Ovary (tissue), 10 donors: ENCODE measurements at regions of chr5 and their contacts with region 1.

Region 1: DNA sequence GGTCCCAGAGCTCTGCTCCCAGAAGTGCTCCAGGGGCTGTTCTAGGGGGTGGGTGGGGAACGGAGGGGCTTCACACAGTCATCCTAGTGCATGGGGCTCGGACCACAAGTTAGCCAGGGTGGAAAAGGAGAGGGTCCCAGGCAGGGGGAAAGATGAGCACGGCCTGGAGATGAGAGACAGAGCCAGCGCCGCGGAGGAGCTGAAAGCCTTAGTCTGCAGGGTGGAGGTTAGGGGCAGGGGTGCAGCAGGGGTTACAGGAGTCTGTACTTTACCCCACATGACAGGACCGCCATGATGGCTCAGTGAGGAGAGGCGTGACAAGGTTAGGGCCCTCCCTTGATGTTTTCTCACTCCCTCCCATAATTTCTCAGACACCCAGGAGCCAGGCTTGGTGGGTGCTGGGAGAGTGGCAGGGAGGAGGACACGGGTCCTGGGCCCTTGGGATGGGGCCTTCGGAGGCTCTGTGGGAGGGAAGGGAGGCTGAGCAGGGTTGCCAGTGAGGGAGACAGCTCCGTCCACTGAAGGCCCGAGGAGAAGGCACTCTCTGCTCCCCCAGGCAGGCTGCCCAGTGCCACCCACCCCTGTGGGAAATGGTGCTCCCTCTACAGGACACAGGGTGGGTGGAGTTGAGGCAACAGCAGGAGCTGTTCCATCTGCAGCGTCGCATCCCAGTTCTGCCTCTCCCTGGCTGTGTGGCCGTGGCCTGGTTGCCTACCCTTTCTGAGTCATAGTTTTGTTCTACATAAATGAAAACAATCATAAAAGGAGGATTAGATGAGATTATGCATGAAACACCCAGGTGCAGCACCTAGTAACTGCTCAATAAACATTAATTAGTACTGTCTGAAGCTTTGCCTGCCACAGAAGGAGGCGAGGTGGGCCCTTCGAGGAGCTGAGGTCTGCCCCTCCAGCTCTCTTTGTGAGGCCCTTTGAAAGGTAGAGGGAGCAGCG is 66.2 kb downstream of the NDST1 start:
- DNase-seq: peak in 3 of 5 donors; percentile 23 to 33 (median 26)
- H3K4me3 ChIP-seq: no peak overlapping the region
- H3K27ac ChIP-seq: no peak overlapping the region
- H3K4me1 ChIP-seq: peaks cover 2% of the 10 kb centered on the region
- H3K27me3 ChIP-seq: no peaks in the 10 kb centered on the region
- CTCF ChIP-seq: no peak
- EP300 ChIP-seq: no peak
- POLR2A ChIP-seq: no peak

Region 2: GRCh38 chr5:150544611-150545219 is 29.4 kb before region 1 on chr5:
- intact Hi-C with region 1: loop called in 1 of 4 experiments (anchors 1 kb)
- DNase-seq: peak; percentile 61 to 79 (median 72)
- H3K4me3 ChIP-seq: no peak overlapping the region
- H3K27ac ChIP-seq: no peak overlapping the region
- H3K4me1 ChIP-seq: peaks cover 16% of the 10 kb centered on the region
- H3K27me3 ChIP-seq: no peaks in the 10 kb centered on the region
- CTCF ChIP-seq: peak; percentile 46 to 72 (median 59)
- EP300 ChIP-seq: no peak
- POLR2A ChIP-seq: no peak

Region 3: GRCh38 chr5:150862070-150862469 is 287.9 kb after region 1 on chr5:
- intact Hi-C with region 1: no loop called
- DNase-seq: no peak
- H3K4me3 ChIP-seq: no peak overlapping the region
- H3K27ac ChIP-seq: no peak overlapping the region
- H3K4me1 ChIP-seq: no peaks in the 10 kb centered on the region
- H3K27me3 ChIP-seq: no peaks in the 10 kb centered on the region
- CTCF ChIP-seq: no peak
- EP300 ChIP-seq: no peak
- POLR2A ChIP-seq: no peak